Sigmoid colon (tissue), 7 donors: ENCODE measurements at regions of chr22 and their contacts with region 1.

Region 1: GRCh38 chr22:20418211-20418788 is 19.3 kb downstream of the SCARF2 start:
- DNase-seq: peak; percentile 96
- H3K4me3 ChIP-seq: peak overlapping the region in 3 of 4 donors; percentile 40 to 45 (median 44)
- H3K27ac ChIP-seq: peak overlapping the region; percentile 60 to 69 (median 64)
- H3K4me1 ChIP-seq: peaks cover 0 to 20% (median 16%) of the 10 kb centered on the region in 4 donors
- H3K27me3 ChIP-seq: no peaks in the 10 kb centered on the region
- CTCF ChIP-seq: peak; percentile 62 to 74 (median 68)
- EP300 ChIP-seq: no peak
- POLR2A ChIP-seq: no peak

Region 2: GRCh38 chr22:20116951-20117645 is 301.2 kb before region 1 on chr22 and contains the start of gene TRMT2A:
- intact Hi-C with region 1: no loop called
- DNase-seq: peak; percentile 99
- H3K4me3 ChIP-seq: peak within 1 kb of the TSS; percentile 67 to 93 (median 86)
- H3K27ac ChIP-seq: peak within 1 kb of the TSS; percentile 83 to 91 (median 88)
- H3K4me1 ChIP-seq: peaks cover 0 to 52% (median 44%) of the 10 kb centered on the region in 4 donors
- H3K27me3 ChIP-seq: no peaks in the 10 kb centered on the region
- CTCF ChIP-seq: no peak
- EP300 ChIP-seq: peak in 1 of 4 donors; percentile 47
- POLR2A ChIP-seq: peak in 1 of 2 donors; percentile 36
- total RNA-seq, gene TRMT2A: 40.0 to 55.1 (median 51.1) TPM

Region 3: DNA sequence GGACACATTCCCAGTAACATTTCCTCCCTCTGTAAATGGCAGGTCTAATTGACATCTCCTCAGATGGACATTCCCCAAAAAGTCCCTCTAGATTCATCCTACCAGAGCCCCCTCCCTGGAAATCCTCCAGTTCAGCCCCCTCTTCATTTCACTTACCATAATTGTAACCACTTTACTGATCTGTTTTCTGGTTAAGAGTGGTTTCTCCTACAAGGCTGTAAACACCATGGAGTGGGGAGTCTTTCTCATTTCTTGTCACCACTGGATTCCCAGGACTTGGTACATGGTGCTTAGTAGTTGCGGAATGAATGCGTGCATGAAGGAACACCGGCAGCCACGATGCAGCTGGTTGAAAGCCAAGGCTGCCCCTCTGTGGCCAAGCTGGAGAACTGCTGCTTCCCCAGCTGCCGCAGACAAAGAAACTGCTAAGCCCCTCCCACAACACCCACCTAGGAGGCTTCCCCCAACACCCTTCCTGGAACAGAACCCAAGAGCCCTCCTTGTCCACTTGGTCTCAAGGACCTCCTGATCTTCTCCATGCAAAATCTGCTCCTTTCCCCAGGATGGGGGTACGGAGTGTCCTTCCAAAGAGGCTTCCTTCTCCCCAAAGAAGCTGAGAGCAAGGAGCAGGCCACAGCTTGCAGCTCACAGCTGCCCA is 37.9 kb after region 1 on chr22:
- intact Hi-C with region 1: loop called (anchors 1 kb)
- DNase-seq: peak; percentile 90
- H3K4me3 ChIP-seq: no peak overlapping the region
- H3K27ac ChIP-seq: no peak overlapping the region
- H3K4me1 ChIP-seq: no peaks in the 10 kb centered on the region
- H3K27me3 ChIP-seq: no peaks in the 10 kb centered on the region
- CTCF ChIP-seq: peak; percentile 83 to 92 (median 88)
- EP300 ChIP-seq: no peak
- POLR2A ChIP-seq: no peak

Region 4: GRCh38 chr22:20495861-20496681 is 77.8 kb after region 1 on chr22:
- intact Hi-C with region 1: loop called (anchors 1 kb)
- DNase-seq: peak; percentile 96
- H3K4me3 ChIP-seq: peak overlapping the region; percentile 42 to 85 (median 72)
- H3K27ac ChIP-seq: peak overlapping the region; percentile 91 to 97 (median 94)
- H3K4me1 ChIP-seq: peaks cover 0 to 38% (median 26%) of the 10 kb centered on the region in 4 donors
- H3K27me3 ChIP-seq: no peaks in the 10 kb centered on the region
- CTCF ChIP-seq: peak; percentile 83 to 97 (median 92)
- EP300 ChIP-seq: no peak
- POLR2A ChIP-seq: peak; percentile 70 to 80